ENCODE measurements at regions of chr4 and their contacts with region 1.

Region 1: DNA sequence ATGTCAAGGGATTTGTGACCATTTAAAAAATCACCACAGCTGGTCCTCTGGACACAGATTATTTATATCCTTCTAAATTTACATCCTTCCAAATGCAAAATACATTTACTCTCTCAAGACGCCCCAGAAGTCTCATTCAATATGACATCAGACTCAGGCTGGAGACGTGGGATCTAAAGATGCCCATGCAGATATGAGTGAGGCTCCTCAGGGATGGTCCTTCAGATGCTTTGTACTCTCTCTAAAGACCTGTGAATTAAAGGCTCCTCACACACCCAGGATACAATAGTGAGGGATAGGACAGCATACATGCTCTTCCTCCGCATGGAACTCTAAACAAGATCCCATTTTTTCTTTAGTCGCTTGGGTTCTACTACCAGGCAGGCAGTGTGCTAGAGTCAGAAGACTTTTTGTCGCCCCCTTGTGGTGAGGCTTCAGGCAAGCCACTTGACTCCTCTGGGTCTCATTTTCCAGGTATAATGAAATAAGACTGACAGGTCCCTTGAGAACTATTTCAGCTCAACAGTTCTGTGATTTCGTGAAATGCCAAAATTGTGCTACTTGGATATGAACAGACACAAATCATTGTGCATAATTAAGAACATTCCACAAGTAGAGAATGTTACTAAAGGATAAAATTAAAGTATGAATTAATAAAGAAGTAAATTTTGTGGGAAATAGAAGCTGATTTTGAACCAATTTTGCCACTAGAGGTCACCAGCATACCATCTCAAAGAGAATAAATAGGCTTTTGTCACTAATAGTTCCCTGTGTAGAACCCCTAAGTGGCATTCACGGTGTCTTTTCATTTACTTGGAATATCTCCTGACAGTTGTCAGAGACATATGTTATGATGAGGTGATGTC is 13.7 kb upstream of the SCOC start:
- DNase-seq: peak; percentile 89
- H3K4me3 Mint-ChIP-seq: no peak overlapping the region
- H3K27ac Mint-ChIP-seq: no peak overlapping the region
- H3K4me1 Mint-ChIP-seq: no peaks in the 10 kb centered on the region
- H3K27me3 Mint-ChIP-seq: no peaks in the 10 kb centered on the region

Region 2: GRCh38 chr4:140012688-140013486 is 346.9 kb before region 1 on chr4:
- CTCF ChIA-PET with region 1: interaction called, 13 read pairs
- intact Hi-C with region 1: loop called (anchors 1 kb)
- DNase-seq: peak; percentile 69
- H3K4me3 Mint-ChIP-seq: no peak overlapping the region
- H3K27ac Mint-ChIP-seq: no peak overlapping the region
- H3K4me1 Mint-ChIP-seq: peaks cover 8% of the 10 kb centered on the region
- H3K27me3 Mint-ChIP-seq: peaks cover 1% of the 10 kb centered on the region

Region 3: DNA sequence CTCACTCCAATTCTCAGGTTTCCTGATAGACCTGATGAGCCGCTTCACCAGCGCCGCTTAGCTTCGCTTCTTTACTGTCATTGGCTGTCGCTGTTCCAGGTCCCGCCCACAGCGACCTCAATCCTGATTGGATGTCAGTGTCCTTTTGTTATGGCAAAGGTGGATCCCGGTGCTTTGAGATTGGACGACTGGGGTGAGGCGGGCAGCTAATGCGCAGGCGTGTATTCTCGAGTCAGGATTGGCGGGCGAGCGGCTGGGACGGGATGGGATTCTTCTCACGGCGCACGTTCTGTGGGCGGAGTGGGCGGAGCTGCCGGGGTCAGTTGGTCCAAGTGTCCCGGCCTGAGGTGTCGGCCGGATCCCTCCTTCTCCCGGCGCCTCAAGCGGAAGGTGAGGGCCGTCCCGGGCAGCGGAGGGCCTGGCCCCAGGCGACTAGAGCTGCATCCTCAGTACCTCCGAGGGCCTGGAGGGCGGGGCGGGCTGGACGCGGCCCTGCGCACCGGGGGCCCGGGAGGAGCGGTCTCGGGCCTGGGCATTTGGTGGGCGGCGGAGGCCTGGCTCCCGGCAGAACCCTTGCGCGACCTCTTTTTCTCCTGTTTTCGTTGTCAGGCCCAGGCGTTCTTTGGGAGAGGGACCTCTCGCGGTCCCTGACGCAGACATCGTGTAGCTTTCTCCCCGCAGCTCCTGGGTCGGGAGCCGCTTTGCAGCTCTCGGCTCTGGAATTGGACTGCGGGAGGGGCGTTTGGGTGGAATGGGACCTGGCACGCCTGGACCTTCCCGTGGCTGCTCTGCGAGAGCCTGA is 13.7 kb after region 1 on chr4 and contains the start of gene SCOC:
- CTCF ChIA-PET with region 1: interaction called, 41 read pairs
- intact Hi-C with region 1: no loop called
- DNase-seq: peak; percentile 99
- H3K4me3 Mint-ChIP-seq: no peak within 1 kb of the TSS
- H3K27ac Mint-ChIP-seq: peak within 1 kb of the TSS; percentile 69
- H3K4me1 Mint-ChIP-seq: peaks cover 33% of the 10 kb centered on the region
- H3K27me3 Mint-ChIP-seq: no peaks in the 10 kb centered on the region
- total RNA-seq, gene SCOC: 44.7 to 49.4 TPM

Region 4: GRCh38 chr4:140609548-140610425 is 250.0 kb after region 1 on chr4:
- CTCF ChIA-PET with region 1: interaction called, 51 read pairs
- intact Hi-C with region 1: loop called (anchors 1 kb)
- DNase-seq: no peak
- H3K4me3 Mint-ChIP-seq: no peak overlapping the region
- H3K27ac Mint-ChIP-seq: no peak overlapping the region
- H3K4me1 Mint-ChIP-seq: peaks cover 1% of the 10 kb centered on the region
- H3K27me3 Mint-ChIP-seq: peaks cover 6% of the 10 kb centered on the region

Region 5: DNA sequence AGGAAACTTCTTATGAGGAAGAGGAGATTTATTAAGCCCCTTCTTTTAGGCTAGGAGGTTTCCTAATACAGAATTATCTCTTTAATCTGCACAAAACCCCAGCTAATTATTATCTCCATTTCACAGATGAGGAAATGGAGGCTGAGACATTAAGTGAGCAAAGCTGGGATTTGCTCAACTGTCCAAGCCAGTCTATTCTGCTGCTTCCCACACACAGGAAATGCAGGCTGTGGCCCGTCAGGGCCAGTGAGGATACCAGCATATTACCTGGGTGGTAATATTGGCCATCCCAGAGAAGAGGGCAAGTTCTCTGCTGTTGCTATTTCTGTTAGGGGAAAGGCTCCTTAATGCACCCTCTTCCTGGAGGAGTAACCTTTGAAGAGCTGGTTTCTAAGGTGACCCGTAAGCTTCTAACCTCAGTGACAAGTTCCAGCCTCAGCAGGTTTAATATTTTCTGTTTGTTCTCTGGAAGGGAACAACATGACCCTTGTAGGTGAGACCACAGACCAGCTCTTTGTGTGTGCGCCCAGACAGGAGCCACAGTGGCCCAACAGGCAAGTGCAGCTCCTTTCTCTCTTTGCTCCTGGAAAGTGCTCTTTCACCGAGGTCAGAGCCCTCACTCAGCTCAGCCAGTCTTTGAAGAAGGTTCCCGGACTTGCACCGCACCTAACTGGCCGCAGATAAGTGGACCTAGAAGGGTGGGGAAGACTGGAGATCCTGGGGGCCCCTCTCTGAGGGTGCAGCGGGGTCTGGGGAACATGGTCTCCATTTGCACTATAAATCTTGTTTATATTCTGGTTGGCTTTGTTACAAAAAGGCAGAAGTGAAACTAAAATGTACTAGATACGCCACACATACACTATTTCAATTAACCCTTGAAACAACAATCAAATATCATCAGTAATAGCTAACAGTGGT is 360.9 kb after region 1 on chr4:
- CTCF ChIA-PET with region 1: no interaction called
- intact Hi-C with region 1: no loop called
- DNase-seq: no peak
- H3K4me3 Mint-ChIP-seq: peak overlapping the region; percentile 23
- H3K27ac Mint-ChIP-seq: no peak overlapping the region
- H3K4me1 Mint-ChIP-seq: peaks cover 19% of the 10 kb centered on the region
- H3K27me3 Mint-ChIP-seq: peaks cover 3% of the 10 kb centered on the region

Region 6: GRCh38 chr4:140851032-140851636 is 491.3 kb after region 1 on chr4:
- CTCF ChIA-PET with region 1: interaction called, 3 read pairs
- intact Hi-C with region 1: loop called (anchors 1 kb)
- DNase-seq: peak; percentile 54
- H3K4me3 Mint-ChIP-seq: no peak overlapping the region
- H3K27ac Mint-ChIP-seq: no peak overlapping the region
- H3K4me1 Mint-ChIP-seq: no peaks in the 10 kb centered on the region
- H3K27me3 Mint-ChIP-seq: peaks cover 21% of the 10 kb centered on the region

Measured in activated naive CD4-positive, alpha-beta T cell treated with anti-CD3 and anti-CD28 coated beads for 36 hours (primary cell).